H1 (cell line): ENCODE measurements at regions of chr9 and their contacts with region 1.

Region 1: GRCh38 chr9:95044712-95045508 is 272.6 kb downstream of the FANCC start:
- DNase-seq: peak; percentile 72 to 89
- H3K4me3 ChIP-seq: peak overlapping the region in 3 of 4 experiments; percentile 29 to 52 (median 41); a peak in 5 of 8 replicates
- H3K27ac ChIP-seq: no peak overlapping the region
- H3K4me1 ChIP-seq: peaks cover 6 to 20% (median 12%) of the 10 kb centered on the region in 4 experiments
- H3K27me3 ChIP-seq: peaks cover 0 to 20% (median 8%) of the 10 kb centered on the region in 4 experiments; a peak in 6 of 7 replicates
- CTCF ChIP-seq: peak; percentile 83 to 94 (median 92)
- EP300 ChIP-seq: 0 out of 3 replicates have a peak, but pooled peaks of 1 of the 2 experiments have one; percentile 34
- POLR2A ChIP-seq: no peak
- RAD21 ChIP-seq: peak; percentile 85 to 91

Region 2: GRCh38 chr9:94783102-94783664 is 261.7 kb before region 1 on chr9:
- CTCF ChIA-PET with region 1: interaction called, 22 read pairs
- POLR2A ChIA-PET with region 1: interaction called, 3 read pairs
- DNase-seq: peak; percentile 13 to 63
- H3K4me3 ChIP-seq: no peak overlapping the region
- H3K27ac ChIP-seq: no peak overlapping the region
- H3K4me1 ChIP-seq: peaks cover 0 to 6% (median 0%) of the 10 kb centered on the region in 4 experiments; a peak in 3 of 7 replicates
- H3K27me3 ChIP-seq: no peaks in the 10 kb centered on the region
- CTCF ChIP-seq: peak in 2 of 3 experiments; percentile 80 to 85; a peak in 3 of 4 replicates
- EP300 ChIP-seq: no peak
- POLR2A ChIP-seq: no peak
- RAD21 ChIP-seq: peak; percentile 92 to 96

Region 3: DNA sequence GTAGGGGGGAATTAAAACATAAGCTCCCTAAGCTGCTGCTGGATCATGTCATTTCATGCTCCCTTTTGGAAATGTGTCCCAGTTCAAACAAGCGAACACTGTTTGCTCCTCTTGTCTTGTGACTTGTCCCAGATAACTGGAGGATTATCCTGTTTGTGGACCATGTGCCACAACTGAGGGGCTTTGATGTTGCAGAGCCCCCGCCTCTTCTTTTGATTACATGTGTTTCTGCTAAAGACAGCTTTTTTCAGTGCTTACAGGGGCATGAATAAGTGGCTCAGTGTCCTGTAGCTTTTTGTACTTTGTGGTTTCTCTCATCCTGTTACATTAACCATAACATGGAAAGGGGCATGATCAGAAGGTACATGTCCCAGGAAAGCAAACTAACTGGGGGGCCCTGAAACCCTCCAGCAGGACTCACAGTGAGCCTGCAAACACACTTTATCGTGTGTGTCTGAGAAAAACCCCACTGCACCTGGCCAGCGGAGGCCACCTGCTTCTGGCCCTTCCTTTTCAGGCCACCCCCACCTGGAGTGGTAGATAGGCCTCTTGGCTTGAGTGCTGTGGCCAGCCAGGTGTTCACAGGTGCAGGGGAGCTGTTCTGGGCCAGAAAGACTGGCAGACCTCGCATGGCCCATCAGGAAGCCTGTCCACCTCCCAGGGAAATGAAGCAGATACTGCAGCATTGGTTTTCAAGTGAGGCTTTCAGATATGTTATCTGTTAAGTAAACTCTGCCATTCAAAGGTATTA is 13.0 kb before region 1 on chr9:
- CTCF ChIA-PET with region 1: interaction called, 10 read pairs
- POLR2A ChIA-PET with region 1: no interaction called
- DNase-seq: no peak
- H3K4me3 ChIP-seq: no peak overlapping the region
- H3K27ac ChIP-seq: no peak overlapping the region
- H3K4me1 ChIP-seq: no peaks in the 10 kb centered on the region; a peak in 1 of 7 replicates
- H3K27me3 ChIP-seq: no peaks in the 10 kb centered on the region
- CTCF ChIP-seq: no peak
- EP300 ChIP-seq: no peak
- POLR2A ChIP-seq: no peak
- RAD21 ChIP-seq: no peak